Activated CD8-positive, alpha-beta T cell treated with anti-CD3 and anti-CD28 coated beads, Interleukin-2, amount 10 ng/mL, durations not matched to agents 7 days and 5 days (primary cell): ENCODE measurements at regions of chr22 and their contacts with region 1.

Region 1: DNA sequence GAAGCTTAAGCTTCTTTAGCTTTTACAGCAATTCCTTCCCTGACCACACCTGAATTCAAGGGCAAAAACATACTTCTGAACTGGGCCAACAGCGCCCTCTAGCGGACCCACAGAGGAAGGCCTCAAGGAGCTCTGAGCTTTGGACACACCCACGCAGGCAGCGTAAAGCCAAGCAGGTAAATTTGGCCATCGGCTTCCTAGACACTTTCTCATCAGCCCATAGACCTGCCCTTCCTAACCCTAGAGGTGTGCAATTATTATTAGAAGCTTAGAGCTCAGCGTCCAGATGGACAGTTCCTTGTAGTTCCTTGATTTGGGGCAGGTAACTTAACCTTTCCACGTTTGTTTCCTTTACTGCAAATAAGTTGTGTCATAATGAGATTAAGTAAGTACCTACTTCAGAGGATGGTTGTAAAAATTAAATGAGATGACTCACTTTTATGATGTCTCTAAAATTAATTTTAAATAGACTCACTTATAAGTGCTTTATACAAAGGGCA is 25.7 kb upstream of the HMGXB4 start:
- DNase-seq: peak; percentile 81
- ATAC-seq: peak; percentile 84
- H3K4me3 Mint-ChIP-seq: no peak overlapping the region
- H3K27ac Mint-ChIP-seq: no peak overlapping the region
- H3K4me1 Mint-ChIP-seq: peaks cover 12% of the 10 kb centered on the region
- H3K27me3 Mint-ChIP-seq: peaks cover 18% of the 10 kb centered on the region

Region 2: DNA sequence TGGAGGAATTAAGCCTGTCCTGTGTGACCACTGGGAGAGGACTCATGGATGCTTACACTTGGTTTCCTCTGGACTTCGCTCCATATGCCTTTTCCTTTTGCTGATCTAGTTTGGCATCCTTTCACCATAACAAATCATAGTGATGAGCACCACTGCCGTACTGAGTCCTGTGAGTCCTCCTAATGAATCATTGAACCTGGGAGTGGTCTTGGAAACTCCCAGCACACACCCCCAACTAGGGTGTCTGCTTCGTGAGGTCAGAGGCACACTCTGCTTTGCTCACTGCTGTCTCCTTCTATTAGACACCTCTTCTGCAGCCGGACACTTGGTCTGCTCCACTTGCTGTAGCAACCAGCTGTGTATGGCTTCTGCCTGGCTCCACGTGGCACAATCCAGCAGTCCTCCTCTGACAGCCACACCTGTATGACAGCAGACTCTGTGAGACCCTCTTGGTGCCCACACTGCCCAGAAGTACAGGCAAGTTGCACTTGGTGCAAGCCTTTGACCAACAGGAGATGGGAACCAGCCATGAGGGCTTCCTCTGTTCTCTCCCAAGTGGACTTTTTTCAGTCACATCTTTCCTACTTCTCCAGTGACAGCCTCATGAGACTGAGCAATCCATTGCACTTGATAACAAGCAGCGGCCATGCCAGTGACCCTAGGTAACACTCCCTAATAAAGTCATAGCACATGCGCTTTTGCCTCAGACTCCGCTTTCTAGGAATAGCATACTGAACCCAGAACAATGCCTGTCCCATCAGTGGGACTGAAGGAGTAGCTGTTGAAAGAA is 39.3 kb before region 1 on chr22:
- CTCF ChIA-PET with region 1: no interaction called
- POLR2A ChIA-PET with region 1: no interaction called
- DNase-seq: no peak
- ATAC-seq: no peak
- H3K4me3 Mint-ChIP-seq: no peak overlapping the region
- H3K27ac Mint-ChIP-seq: no peak overlapping the region
- H3K4me1 Mint-ChIP-seq: no peaks in the 10 kb centered on the region
- H3K27me3 Mint-ChIP-seq: no peaks in the 10 kb centered on the region

Region 3: GRCh38 chr22:35217527-35217926 is 14.1 kb before region 1 on chr22:
- CTCF ChIA-PET with region 1: interaction called, 11 read pairs
- POLR2A ChIA-PET with region 1: no interaction called
- DNase-seq: no peak
- ATAC-seq: no peak
- H3K4me3 Mint-ChIP-seq: no peak overlapping the region
- H3K27ac Mint-ChIP-seq: no peak overlapping the region
- H3K4me1 Mint-ChIP-seq: no peaks in the 10 kb centered on the region
- H3K27me3 Mint-ChIP-seq: no peaks in the 10 kb centered on the region